Motor neuron (in vitro differentiated cells): ENCODE measurements at regions of chr12 and their contacts with region 1.

Region 1: GRCh38 chr12:130747867-130748740 is 32.0 kb upstream of the RIMBP2 start:
- ATAC-seq: peak; percentile 97 to 100 (median 99)
- H3K4me3 ChIP-seq: no peak overlapping the region
- H3K27ac ChIP-seq: no peak overlapping the region
- H3K4me1 ChIP-seq: peaks cover 0 to 6% of the 10 kb centered on the region in 2 donors

Region 2: GRCh38 chr12:130031571-130032189 is 716.4 kb before region 1 on chr12:
- in situ Hi-C with region 1: loop called in 2 of 9 experiments (anchors 25 kb)
- ATAC-seq: peak in 4 of 8 experiments; percentile 39 to 80 (median 58)
- H3K4me3 ChIP-seq: no peak overlapping the region
- H3K27ac ChIP-seq: no peak overlapping the region
- H3K4me1 ChIP-seq: no peaks in the 10 kb centered on the region

Region 3: DNA sequence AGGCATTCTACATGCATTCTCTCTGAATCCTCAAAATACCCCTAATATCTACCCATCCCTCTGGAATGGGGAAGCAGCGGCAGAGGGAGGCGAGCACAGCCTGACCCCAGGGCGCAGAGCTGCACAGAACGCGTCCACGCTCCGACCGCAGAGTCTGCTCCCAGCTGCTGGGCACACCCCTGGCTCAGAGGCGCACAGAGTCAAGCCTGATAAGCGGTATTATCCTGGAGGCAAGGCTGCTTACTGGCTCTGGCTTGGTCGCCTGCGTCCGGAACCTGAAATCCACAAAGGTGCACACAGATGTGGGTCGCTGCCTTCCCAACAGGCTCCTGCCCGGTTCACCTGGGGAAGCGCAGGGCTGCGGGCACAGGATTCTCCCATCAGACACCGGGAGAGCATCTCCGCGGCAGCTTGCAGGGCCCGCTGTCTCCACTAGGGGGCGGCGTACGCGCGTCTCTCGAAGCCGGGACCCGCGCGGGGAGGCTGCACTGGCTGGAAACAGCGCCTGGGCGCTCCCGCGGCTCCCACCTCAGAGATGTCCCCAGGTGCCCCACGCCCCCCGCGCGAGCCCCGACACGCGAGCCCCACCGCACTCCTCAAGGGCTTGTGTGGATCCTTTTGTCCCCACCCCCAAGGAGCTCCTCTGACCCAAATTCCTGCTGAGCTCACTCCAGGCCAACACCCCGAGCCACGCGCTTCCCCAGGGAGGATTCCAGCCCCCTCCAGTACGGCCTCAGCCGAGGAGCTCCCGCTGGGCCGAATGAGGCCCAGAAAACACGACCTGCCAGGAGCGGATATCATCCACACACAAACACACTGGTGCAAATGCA is 705.9 kb before region 1 on chr12:
- in situ Hi-C with region 1: loop called in 3 of 9 experiments (anchors 10 to 25 kb)
- ATAC-seq: peak in 3 of 8 experiments; percentile 72 to 88 (median 84)
- H3K4me3 ChIP-seq: peak overlapping the region in 2 of 5 donors; percentile 21 to 22
- H3K27ac ChIP-seq: no peak overlapping the region
- H3K4me1 ChIP-seq: no peaks in the 10 kb centered on the region

Region 4: DNA sequence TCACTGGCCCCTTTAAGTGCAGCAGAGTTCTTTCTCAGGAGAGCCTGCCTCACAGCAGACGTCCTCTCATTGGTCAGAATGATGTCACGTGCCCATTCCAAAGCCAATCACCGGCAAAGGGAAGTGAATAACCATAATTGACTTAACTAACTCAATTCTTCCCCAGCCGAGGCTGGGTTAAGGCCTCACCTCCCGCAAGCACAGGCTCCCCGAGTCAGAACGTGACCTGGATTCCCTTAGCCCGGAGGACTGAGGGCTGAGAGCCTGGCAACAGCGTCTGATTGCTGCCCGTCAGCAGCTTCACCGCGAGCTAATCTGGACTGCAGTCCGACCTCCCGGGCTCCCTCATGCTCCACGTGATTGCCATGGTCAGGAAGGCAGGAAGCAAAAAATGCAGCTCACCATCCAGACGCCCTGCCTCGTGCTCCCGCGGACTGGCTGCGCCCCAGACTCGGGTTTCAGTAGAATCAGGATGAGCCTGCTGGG is 677.9 kb before region 1 on chr12:
- in situ Hi-C with region 1: loop called in 1 of 9 experiments (anchors 25 kb)
- ATAC-seq: peak in 3 of 8 experiments; percentile 74 to 79 (median 78)
- H3K4me3 ChIP-seq: no peak overlapping the region
- H3K27ac ChIP-seq: no peak overlapping the region
- H3K4me1 ChIP-seq: no peaks in the 10 kb centered on the region

Region 5: DNA sequence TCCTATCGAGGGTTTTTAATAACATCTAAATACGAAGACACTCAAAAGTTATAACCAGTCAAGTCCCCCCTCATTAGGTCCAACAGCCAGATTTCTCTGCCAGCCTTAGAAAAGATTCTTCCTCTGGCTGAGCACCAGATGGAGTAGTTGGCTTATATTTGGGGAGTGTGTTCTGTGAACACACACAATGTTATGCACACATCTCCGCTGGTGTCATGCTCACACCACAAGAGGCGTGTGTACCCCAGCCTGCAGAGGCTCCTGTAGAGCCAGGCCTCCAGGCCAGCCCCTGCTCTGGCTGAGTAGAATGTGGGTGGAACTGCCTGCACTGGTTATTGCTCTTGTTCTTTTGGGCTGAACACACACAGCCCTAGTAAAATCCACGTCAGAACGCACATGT is 346.4 kb before region 1 on chr12:
- in situ Hi-C with region 1: loop called in 1 of 9 experiments (anchors 25 kb)
- ATAC-seq: peak in 4 of 8 experiments; percentile 63 to 84 (median 82)
- H3K4me3 ChIP-seq: no peak overlapping the region
- H3K27ac ChIP-seq: no peak overlapping the region
- H3K4me1 ChIP-seq: no peaks in the 10 kb centered on the region

Region 6: DNA sequence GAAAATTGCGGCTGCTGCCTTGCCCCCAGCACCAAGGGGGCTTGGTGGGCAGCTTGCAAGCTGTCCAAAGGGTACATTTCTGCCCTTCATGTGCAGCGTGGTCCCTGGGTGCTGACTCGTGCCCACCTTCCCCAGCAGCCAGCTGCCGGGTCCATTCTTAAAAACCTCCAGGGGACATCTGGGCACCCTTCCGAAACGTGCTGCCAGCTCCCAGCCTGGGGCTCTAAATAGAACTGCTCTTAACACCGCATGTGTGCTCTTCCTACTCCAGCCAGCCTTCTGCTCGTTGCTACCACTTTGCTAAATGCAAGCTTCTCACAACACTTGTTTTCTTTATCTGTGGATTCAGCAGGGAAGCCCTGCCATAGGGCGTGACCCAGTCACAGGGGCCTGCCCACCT is 98.0 kb before region 1 on chr12:
- in situ Hi-C with region 1: no loop called
- ATAC-seq: peak in 3 of 8 experiments; percentile 28 to 50 (median 38)
- H3K4me3 ChIP-seq: no peak overlapping the region
- H3K27ac ChIP-seq: no peak overlapping the region
- H3K4me1 ChIP-seq: peaks cover 0 to 37% of the 10 kb centered on the region in 2 donors